ENCODE measurements at regions of chr6 and their contacts with region 1.

Region 1: GRCh38 chr6:20534295-20535262 is at the start of gene CDKAL1:
- DNase-seq: peak; percentile 77 to 92 (median 88)
- ATAC-seq: peak; percentile 97 to 99 (median 97)
- H3K4me3 ChIP-seq: peak within 1 kb of the TSS; percentile 53 to 87 (median 74)
- H3K27ac ChIP-seq: peak within 1 kb of the TSS in 3 of 4 donors; percentile 55 to 82 (median 74)
- H3K4me1 ChIP-seq: peaks cover 6 to 8% (median 8%) of the 10 kb centered on the region in 3 donors
- H3K27me3 ChIP-seq: no peaks in the 10 kb centered on the region
- CTCF ChIP-seq: no peak
- total RNA-seq, gene CDKAL1: 6.7 to 11.7 (median 8.8) TPM

Region 2: DNA sequence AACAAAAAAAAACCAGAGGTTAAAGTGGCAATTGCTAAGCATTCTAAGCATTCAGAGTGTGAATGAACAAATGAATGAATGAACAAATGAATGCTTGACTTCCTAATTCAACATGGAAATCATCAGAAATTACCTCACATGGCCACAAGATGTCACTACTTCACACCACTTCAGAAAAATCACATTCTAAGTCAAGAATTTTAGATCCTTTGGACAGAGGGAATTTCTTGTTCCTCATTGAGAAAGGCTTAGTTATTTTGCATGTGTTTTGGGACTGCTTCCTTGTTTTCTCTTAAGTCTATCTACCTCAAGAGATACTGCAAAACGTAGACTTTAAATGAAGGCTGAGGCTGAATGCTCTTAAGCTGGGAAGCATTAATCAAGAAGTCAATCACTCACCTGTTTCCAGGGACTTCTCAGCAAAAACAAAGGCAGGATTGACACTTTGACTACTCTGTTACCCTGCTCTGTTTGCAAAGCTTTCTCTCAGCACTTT is 442.5 kb before region 1 on chr6:
- intact Hi-C with region 1: loop called in 1 of 3 experiments (anchors 10 kb)
- DNase-seq: no peak
- ATAC-seq: peak in 3 of 4 donors; percentile 63 to 71 (median 71)
- H3K4me3 ChIP-seq: no peak overlapping the region
- H3K27ac ChIP-seq: no peak overlapping the region
- H3K4me1 ChIP-seq: no peaks in the 10 kb centered on the region
- H3K27me3 ChIP-seq: no peaks in the 10 kb centered on the region
- CTCF ChIP-seq: peak; percentile 40 to 61 (median 54)

Region 3: DNA sequence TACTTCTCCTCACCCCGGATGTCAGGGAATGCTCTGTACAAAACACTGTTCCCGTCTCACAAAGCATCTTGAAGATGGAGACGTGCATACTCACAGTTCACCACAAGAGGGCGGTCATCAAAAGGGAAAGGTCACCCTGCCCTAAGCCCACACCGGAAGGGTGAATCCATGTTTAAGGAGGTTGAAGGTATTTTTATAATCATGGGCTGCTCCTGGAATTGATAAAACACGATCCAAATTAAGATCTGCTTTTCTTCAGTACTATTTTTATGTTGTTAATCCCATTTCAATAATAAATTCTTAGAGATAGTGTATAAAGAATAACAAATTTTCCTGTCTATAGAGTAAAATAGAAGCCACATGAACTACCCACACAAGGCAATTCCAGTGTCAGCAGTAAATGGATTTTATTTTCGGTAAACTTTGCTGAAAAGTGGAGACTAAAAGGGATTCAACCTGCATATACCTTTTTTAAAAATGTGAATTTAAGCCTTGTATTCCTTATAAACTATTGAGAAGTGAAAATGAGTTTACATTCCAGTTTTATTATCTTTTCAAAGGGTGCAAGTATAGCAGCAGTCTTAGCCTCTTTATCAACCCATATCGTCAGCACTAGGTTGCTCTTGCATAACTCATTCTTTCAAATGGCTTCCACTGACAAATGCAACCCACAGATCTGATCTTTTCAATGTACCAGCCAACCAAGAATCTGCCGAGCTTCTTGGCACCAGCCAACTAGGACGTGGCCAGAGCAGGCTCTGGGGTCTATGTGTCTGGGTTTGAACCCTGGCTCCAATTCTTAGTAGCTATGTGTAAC is 242.6 kb before region 1 on chr6:
- intact Hi-C with region 1: loop called (anchors 5 to 10 kb)
- DNase-seq: peak in 5 of 6 donors; percentile 34 to 79 (median 67)
- ATAC-seq: peak; percentile 79 to 99 (median 96)
- H3K4me3 ChIP-seq: no peak overlapping the region
- H3K27ac ChIP-seq: no peak overlapping the region
- H3K4me1 ChIP-seq: no peaks in the 10 kb centered on the region
- H3K27me3 ChIP-seq: no peaks in the 10 kb centered on the region
- CTCF ChIP-seq: peak; percentile 68 to 88 (median 77)

Region 4: DNA sequence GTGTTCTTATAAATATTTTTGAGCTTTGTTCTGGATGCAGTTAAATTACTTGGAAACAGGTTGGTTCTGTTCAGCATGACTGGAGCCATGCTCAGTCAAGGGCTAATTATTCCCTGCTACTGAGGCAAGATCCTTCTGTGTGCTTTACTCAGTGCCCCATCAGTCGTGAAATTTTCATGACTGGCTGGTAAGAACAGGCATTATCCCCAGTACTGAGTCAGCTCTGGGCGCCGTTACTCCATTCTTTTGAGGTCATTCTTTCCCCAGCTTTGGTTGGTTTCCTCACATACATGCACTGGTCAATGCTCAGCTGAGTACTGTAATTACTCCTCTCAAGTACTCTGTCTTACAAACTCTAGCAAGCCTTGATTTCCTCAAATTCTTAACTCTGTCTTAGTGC is 71.0 kb after region 1 on chr6:
- intact Hi-C with region 1: no loop called
- DNase-seq: no peak
- ATAC-seq: peak in 1 of 4 donors; percentile 44
- H3K4me3 ChIP-seq: no peak overlapping the region
- H3K27ac ChIP-seq: no peak overlapping the region
- H3K4me1 ChIP-seq: peaks cover 0 to 3% (median 0%) of the 10 kb centered on the region in 3 donors
- H3K27me3 ChIP-seq: no peaks in the 10 kb centered on the region
- CTCF ChIP-seq: no peak

Region 5: DNA sequence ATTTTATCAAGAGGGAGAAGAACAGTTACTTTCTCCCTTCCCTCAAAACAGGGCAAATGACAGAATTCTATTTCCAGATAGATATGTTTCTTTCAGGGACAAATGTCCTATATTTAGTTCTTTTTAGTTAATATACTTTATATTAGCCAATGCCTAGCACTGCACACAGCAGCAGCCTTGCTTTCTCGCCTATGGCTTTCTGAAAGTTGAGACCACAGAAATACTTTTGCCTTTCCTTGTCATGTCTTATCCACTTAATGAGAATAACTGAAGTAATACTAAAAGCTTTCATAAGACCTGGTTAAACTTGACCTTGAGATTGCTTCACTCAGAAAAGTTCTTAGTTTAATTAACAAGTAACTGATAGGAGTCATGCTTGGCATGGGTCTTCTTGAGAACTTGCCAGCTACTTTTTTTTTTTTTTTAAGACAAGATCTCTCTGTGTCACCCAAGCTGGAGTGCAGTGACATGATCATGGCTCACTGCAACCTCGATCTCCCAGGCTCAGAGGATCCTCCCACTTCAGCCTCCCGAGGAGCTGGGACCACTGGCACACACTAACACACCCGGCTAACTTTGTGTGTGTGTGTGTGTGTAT is 159.0 kb after region 1 on chr6:
- intact Hi-C with region 1: no loop called
- DNase-seq: no peak
- ATAC-seq: peak in 1 of 4 donors; percentile 28
- H3K4me3 ChIP-seq: no peak overlapping the region
- H3K27ac ChIP-seq: no peak overlapping the region
- H3K4me1 ChIP-seq: peaks cover 0 to 10% (median 6%) of the 10 kb centered on the region in 3 donors
- H3K27me3 ChIP-seq: no peaks in the 10 kb centered on the region
- CTCF ChIP-seq: no peak

Measured in pancreas (tissue), 10 donors.